Caco-2 (cell line): ENCODE measurements at regions of chr16 and their contacts with region 1.

Region 1: DNA sequence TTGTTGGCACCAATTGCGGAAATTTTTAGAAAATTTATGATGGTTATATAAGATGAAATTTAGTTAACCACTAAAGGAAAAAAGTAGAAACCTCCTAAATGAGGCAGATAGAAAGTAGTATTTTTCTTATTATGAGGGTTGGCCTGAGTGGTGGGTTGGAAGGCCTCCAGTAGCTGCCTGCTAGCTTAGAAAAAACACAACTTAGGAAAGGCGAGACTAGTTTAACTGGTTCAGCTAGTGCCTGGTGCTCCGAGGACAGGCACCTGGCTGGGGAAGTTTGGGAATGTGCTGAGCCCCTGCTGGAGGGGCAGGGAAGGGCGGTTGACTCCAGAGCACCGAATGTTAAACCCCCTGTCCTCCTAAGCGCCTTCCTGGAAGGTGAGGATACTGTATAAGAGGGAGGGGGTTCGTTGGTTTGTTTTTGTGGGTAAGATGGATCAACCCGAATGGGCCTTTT is 19.9 kb downstream of the LDHD start:
- DNase-seq: peak; percentile 85 to 90
- H3K4me3 ChIP-seq: no peak overlapping the region
- H3K4me3 Mint-ChIP-seq: no peak overlapping the region
- H3K27ac Mint-ChIP-seq: peak overlapping the region; percentile 84
- H3K4me1 ChIP-seq: peaks cover 30% of the 10 kb centered on the region
- H3K4me1 Mint-ChIP-seq: peaks cover 24% of the 10 kb centered on the region
- H3K27me3 ChIP-seq: no peaks in the 10 kb centered on the region
- H3K27me3 Mint-ChIP-seq: no peaks in the 10 kb centered on the region
- CTCF ChIP-seq: peak; percentile 79 to 87

Region 2: GRCh38 chr16:74984535-74985296 is 112.0 kb before region 1 on chr16 and contains the start of gene WDR59:
- CTCF ChIA-PET with region 1: interaction called, 24 read pairs
- POLR2A ChIA-PET with region 1: no interaction called
- intact Hi-C with region 1: no loop called
- DNase-seq: peak; percentile 100
- H3K4me3 ChIP-seq: peak within 1 kb of the TSS; percentile 84
- H3K4me3 Mint-ChIP-seq: peak within 1 kb of the TSS; percentile 80
- H3K27ac Mint-ChIP-seq: peak within 1 kb of the TSS; percentile 85
- H3K4me1 ChIP-seq: peaks cover 35% of the 10 kb centered on the region
- H3K4me1 Mint-ChIP-seq: peaks cover 8% of the 10 kb centered on the region
- H3K27me3 ChIP-seq: no peaks in the 10 kb centered on the region
- H3K27me3 Mint-ChIP-seq: no peaks in the 10 kb centered on the region
- CTCF ChIP-seq: no peak
- total RNA-seq, gene WDR59: 148 and 174 TPM in 2 replicates

Region 3: GRCh38 chr16:75058806-75059205 is 37.9 kb before region 1 on chr16:
- CTCF ChIA-PET with region 1: no interaction called
- POLR2A ChIA-PET with region 1: interaction called, 3 read pairs
- intact Hi-C with region 1: loop called (anchors 2 kb)
- DNase-seq: no peak
- H3K4me3 ChIP-seq: no peak overlapping the region
- H3K4me3 Mint-ChIP-seq: peak overlapping the region; percentile 19
- H3K27ac Mint-ChIP-seq: peak overlapping the region; percentile 77
- H3K4me1 ChIP-seq: peaks cover 28% of the 10 kb centered on the region
- H3K4me1 Mint-ChIP-seq: peaks cover 17% of the 10 kb centered on the region
- H3K27me3 ChIP-seq: no peaks in the 10 kb centered on the region
- H3K27me3 Mint-ChIP-seq: no peaks in the 10 kb centered on the region
- CTCF ChIP-seq: no peak